Common myeloid progenitor, CD34-positive (primary cell): ENCODE measurements at regions of chr5 and their contacts with region 1.

Region 1: GRCh38 chr5:131786900-131787692 is 9.7 kb downstream of the FNIP1 start:
- DNase-seq: no peak
- H3K4me3 ChIP-seq: no peak overlapping the region
- H3K27ac ChIP-seq: no peak overlapping the region
- H3K4me1 ChIP-seq: peaks cover 3 to 16% (median 13%) of the 10 kb centered on the region in 4 experiments
- H3K27me3 ChIP-seq: no peaks in the 10 kb centered on the region

Region 2: DNA sequence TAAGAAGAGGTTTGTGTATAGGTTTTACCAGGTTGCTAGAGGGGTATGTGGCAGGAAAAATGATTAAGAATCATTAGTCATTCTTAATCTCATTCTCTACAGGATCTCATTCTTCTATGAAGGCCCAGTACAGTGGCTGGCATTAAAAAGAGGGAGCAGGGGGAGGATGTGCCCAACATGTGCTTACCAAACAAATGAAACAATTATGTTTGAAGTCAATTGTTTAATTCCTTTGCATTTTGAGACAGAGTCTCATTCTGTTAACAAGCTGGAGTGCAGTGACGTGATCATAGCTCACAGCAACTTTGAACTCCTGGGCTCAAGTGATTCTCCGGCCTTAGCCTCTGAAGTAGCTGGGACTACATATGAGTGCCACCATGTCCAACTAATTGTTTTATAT is 13.3 kb before region 1 on chr5:
- CTCF ChIA-PET with region 1: interaction called, 15 read pairs
- POLR2A ChIA-PET with region 1: no interaction called
- DNase-seq: peak in 1 of 3 donors; percentile 47
- H3K4me3 ChIP-seq: no peak overlapping the region
- H3K27ac ChIP-seq: no peak overlapping the region
- H3K4me1 ChIP-seq: peaks cover 16 to 35% (median 23%) of the 10 kb centered on the region in 4 experiments
- H3K27me3 ChIP-seq: no peaks in the 10 kb centered on the region